ENCODE measurements at regions of chr17 and their contacts with region 1.

Region 1: DNA sequence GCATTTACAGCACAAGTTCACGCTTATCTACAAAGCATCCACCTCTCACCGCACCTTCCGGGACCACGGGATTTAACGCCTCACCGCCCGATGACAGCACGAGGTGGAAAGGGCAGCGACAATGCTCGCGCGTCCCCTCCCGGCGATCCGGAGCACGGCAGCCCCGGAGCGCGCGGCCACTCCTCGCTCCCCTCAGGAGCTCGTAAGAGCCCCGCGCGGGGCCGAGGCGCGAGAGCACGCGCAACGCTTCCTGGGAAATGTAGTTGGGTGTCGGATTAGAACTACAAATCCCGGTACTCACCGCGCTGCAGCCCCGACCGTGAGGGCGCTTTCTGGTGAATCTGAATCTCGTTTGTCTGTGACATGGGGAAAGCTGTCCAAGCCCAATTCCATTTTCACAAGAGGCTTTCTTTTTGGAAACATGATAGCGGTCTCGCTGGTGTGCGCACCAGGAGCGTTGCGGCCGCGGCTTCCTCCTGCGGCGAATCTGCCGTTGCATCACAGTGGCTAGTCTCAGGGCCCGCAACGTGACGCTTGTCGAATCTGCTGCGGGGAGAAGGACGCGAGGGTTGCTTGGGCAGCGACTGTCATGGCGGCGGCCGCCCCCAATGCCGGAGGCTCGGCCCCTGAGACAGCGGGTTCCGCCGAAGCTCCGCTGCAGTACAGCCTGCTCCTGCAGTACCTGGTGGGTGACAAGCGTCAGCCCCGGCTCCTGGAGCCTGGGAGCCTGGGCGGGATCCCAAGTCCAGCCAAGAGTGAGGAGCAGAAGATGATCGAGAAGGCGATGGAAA is at the start of gene TIMM22:
- DNase-seq: peak; percentile 96
- ATAC-seq: peak; percentile 98
- H3K4me3 ChIP-seq: peak within 1 kb of the TSS; percentile 100
- H3K27ac ChIP-seq: peak within 1 kb of the TSS; percentile 68
- H3K4me1 ChIP-seq: peaks cover 12% of the 10 kb centered on the region
- H3K27me3 ChIP-seq: no peaks in the 10 kb centered on the region
- CTCF ChIP-seq: peak; percentile 81
- total RNA-seq, gene TIMM22: 17.2 and 17.7 TPM in 2 replicates

Region 2: DNA sequence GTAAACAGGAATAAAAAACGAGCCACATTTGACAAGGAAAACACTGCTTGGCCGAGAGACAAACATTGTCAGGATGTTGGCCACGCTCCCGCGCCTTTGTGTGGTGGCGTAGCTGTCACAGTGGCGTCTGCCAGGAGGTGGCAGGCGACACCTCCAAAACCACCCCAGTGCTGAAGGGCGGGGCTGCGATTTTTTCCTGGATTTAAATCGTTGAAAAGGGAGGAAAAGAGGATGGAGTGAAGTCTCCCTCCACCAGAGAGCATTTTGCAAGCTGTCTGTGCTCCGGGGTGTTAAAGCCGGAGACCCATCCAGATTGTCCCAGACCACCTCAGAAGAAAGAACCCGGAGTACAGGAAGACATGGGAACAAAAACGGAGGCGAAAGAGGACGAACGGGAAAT is 201.9 kb before region 1 on chr17:
- CTCF ChIA-PET with region 1: interaction called, 7 read pairs
- POLR2A ChIA-PET with region 1: no interaction called
- intact Hi-C with region 1: loop called (anchors 2 kb)
- DNase-seq: peak; percentile 80
- ATAC-seq: peak; percentile 76
- H3K4me3 ChIP-seq: peak overlapping the region; percentile 51; the same call in 1 of the 2 replicates
- H3K27ac ChIP-seq: no peak overlapping the region
- H3K4me1 ChIP-seq: peaks cover 9% of the 10 kb centered on the region
- H3K27me3 ChIP-seq: no peaks in the 10 kb centered on the region
- CTCF ChIP-seq: peak; percentile 86

Region 3: DNA sequence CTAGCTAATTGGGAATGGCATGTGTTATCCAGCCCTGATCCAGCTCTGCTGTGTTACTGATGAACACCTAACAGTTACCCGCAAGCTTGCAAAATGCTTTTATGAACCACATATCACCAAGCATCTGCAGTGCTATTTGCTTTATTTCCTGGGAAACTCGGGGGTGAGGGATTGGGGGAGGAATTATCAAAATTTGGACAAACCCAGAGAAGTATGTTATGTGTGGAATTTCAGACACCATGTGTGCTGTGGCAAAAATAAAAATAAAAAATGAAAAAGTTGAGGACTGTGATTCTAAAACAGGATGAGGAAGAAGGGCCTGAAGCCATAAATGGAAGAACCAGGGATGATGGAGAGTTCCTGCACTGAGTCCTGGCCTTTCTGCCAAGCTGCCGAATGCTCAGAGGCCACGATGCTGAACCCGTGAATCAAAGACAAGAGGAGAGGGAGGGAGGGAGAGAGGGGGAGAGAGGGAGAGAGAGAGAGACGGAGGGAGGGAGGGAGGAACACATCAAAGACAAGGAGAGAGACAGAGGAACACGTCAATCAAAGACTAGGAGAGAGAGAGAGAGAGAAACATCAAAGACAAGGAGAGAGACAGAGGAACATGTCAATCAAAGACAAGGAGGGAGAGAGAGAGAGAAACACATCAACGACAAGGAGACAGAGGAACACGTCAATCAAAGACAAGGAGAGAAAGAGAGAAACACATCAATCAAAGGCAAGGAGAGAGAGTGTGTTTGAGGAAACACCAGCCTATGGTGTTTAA is 124.8 kb before region 1 on chr17:
- CTCF ChIA-PET with region 1: no interaction called
- POLR2A ChIA-PET with region 1: interaction called, 19 read pairs
- intact Hi-C with region 1: no loop called
- DNase-seq: no peak
- ATAC-seq: no peak
- H3K4me3 ChIP-seq: no peak overlapping the region
- H3K27ac ChIP-seq: no peak overlapping the region
- H3K4me1 ChIP-seq: peaks cover 5% of the 10 kb centered on the region
- H3K27me3 ChIP-seq: no peaks in the 10 kb centered on the region
- CTCF ChIP-seq: no peak

Measured in PC-3 (cell line).